Calu3 (cell line): ENCODE measurements at regions of chr4 and their contacts with region 1.

Region 1: GRCh38 chr4:169269916-169270809 is 593 bp downstream of the SH3RF1 start:
- DNase-seq: peak; percentile 45
- H3K4me3 Mint-ChIP-seq: peak overlapping the region; percentile 92
- H3K27ac Mint-ChIP-seq: peak overlapping the region; percentile 87
- H3K4me1 Mint-ChIP-seq: peaks cover 27% of the 10 kb centered on the region
- H3K27me3 Mint-ChIP-seq: no peaks in the 10 kb centered on the region
- CTCF ChIP-seq: no peak

Region 2: DNA sequence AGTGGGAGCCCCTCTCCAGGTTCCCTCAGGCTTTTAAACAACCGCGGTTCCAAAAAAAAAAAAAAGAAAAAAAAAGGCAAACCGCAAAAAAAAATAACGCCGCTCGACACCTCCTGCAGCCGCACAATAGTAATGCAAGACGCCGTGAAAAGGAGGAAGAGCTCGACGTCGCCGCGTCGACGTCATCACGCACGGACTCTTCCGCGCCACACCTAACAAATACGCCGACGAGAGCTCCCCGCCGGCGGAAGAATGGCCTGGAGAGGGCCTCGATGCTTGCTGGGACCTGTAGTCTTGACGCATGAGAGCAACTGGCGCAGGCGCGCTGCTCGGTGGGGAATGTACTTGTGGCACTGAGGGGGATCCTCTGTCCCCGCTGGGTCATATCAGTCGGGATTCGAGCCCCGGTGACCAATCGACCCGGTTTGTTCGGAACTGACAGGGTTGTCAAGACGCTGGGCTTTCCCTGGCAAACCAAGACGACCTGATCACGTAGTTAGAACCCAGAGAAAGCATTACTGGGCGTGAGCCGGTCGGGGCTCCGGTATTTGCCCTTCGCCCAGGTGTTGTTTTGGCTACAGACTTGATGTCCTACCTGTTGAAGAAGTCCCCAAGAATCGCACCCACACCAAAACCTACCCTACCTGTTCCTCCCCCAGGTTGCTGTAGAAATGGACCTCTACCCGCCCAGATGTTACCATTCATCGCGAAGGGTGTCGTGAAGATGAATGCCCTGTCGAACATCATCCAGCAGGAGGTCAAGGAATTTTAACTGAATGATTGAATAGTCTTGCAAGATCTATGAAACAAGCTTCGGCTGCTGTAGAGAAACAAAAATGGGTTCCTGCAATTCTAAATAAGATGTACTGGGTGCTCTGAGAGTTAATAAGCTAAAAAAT is 259.8 kb before region 1 on chr4 and contains the start of gene CBR4:
- CTCF ChIA-PET with region 1: no interaction called
- intact Hi-C with region 1: loop called (anchors 5 kb)
- DNase-seq: peak; percentile 87
- H3K4me3 Mint-ChIP-seq: peak within 1 kb of the TSS; percentile 80
- H3K27ac Mint-ChIP-seq: peak within 1 kb of the TSS; percentile 88
- H3K4me1 Mint-ChIP-seq: peaks cover 42% of the 10 kb centered on the region
- H3K27me3 Mint-ChIP-seq: no peaks in the 10 kb centered on the region
- CTCF ChIP-seq: no peak
- total RNA-seq, gene CBR4: 18.1 and 18.5 TPM in 2 replicates

Region 3: GRCh38 chr4:169079942-169080827 is 190.0 kb before region 1 on chr4:
- CTCF ChIA-PET with region 1: no interaction called
- intact Hi-C with region 1: no loop called
- DNase-seq: peak; percentile 76
- H3K4me3 Mint-ChIP-seq: peak overlapping the region; percentile 41
- H3K27ac Mint-ChIP-seq: peak overlapping the region; percentile 93
- H3K4me1 Mint-ChIP-seq: peaks cover 31% of the 10 kb centered on the region
- H3K27me3 Mint-ChIP-seq: no peaks in the 10 kb centered on the region
- CTCF ChIP-seq: no peak

Region 4: DNA sequence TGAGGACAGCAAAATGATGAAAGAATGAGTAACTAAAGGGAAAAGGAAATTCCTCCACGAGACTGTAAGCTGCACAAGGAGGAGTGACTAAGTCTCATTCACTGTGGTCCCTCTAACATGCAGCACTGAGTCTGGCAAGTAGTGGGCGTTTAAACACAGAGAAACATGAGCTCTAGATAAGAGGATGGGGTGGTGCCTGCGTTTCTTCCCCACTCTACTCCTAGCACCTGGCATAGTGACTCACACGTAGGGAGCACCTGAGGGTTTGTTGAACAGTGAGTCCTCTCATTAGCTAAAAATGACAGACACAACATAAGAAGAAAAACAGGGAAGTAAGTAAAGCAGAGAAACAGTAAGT is 154.3 kb before region 1 on chr4:
- CTCF ChIA-PET with region 1: no interaction called
- intact Hi-C with region 1: loop called (anchors 5 kb)
- DNase-seq: peak; percentile 78
- H3K4me3 Mint-ChIP-seq: peak overlapping the region; percentile 5
- H3K27ac Mint-ChIP-seq: peak overlapping the region; percentile 85
- H3K4me1 Mint-ChIP-seq: peaks cover 68% of the 10 kb centered on the region
- H3K27me3 Mint-ChIP-seq: no peaks in the 10 kb centered on the region
- CTCF ChIP-seq: no peak

Region 5: GRCh38 chr4:169225058-169225751 is 45.0 kb before region 1 on chr4:
- CTCF ChIA-PET with region 1: interaction called, 3 read pairs
- intact Hi-C with region 1: loop called (anchors 5 kb)
- DNase-seq: peak; percentile 11
- H3K4me3 Mint-ChIP-seq: no peak overlapping the region
- H3K27ac Mint-ChIP-seq: no peak overlapping the region
- H3K4me1 Mint-ChIP-seq: peaks cover 17% of the 10 kb centered on the region
- H3K27me3 Mint-ChIP-seq: no peaks in the 10 kb centered on the region
- CTCF ChIP-seq: no peak

Region 6: GRCh38 chr4:169485791-169486742 is 215.9 kb after region 1 on chr4:
- CTCF ChIA-PET with region 1: no interaction called
- intact Hi-C with region 1: loop called (anchors 2 kb)
- DNase-seq: peak; percentile 50
- H3K4me3 Mint-ChIP-seq: no peak overlapping the region
- H3K27ac Mint-ChIP-seq: no peak overlapping the region
- H3K4me1 Mint-ChIP-seq: no peaks in the 10 kb centered on the region
- H3K27me3 Mint-ChIP-seq: no peaks in the 10 kb centered on the region
- CTCF ChIP-seq: no peak